ENCODE measurements at regions of chr3 and their contacts with region 1.

Region 1: DNA sequence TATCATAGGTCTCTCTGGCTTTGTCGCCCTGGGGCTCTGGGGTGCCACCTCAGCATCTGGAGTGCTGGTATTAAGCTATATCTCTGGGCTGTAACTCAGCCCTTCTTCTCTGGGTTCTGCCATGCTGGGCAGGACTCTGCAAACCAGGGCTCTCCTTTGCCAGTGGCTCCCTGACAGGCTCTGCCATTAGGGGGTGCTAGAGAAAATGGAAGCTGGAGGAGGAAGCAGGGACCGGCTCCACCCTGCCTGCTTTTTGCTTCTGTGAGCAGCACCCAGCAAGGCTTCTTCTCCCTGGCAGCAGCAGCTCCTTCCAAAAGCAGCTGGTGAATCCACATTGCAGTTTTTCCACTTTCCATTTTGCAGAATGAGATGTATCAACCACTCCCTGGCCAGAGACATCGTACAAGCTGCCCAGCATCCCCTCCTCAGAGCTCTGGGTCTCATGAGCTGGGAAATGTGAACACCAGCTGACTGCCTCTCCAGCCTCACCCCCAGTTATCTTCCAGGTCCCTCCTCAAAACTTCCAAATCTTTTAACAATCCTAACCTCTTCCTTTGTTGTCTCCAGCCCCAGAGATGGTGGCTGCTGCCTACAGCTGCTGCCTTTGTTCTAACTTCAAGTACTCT is 165.0 kb downstream of the ABHD5 start:
- DNase-seq: no peak

Region 2: DNA sequence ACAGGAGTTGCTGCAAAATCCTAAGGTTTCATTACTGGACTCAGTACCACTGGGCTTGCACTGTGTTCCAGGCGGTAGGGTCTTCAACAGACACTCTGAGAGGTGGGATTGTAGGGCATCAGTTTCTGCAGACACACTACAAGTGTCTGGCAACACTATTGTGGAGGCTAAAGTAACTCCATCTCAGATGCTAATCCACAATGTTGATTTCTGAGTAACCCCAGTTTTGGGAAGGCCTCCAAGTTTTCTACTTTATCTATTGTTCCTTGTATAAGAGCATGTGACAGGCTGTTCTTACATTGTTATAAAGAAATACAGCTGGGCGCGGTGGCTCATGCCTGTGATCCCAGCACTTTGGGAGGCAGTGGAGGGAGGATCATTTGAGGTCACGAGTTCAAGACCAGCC is 167.5 kb before region 1 on chr3:
- intact Hi-C with region 1: no loop called
- DNase-seq: no peak

Region 3: DNA sequence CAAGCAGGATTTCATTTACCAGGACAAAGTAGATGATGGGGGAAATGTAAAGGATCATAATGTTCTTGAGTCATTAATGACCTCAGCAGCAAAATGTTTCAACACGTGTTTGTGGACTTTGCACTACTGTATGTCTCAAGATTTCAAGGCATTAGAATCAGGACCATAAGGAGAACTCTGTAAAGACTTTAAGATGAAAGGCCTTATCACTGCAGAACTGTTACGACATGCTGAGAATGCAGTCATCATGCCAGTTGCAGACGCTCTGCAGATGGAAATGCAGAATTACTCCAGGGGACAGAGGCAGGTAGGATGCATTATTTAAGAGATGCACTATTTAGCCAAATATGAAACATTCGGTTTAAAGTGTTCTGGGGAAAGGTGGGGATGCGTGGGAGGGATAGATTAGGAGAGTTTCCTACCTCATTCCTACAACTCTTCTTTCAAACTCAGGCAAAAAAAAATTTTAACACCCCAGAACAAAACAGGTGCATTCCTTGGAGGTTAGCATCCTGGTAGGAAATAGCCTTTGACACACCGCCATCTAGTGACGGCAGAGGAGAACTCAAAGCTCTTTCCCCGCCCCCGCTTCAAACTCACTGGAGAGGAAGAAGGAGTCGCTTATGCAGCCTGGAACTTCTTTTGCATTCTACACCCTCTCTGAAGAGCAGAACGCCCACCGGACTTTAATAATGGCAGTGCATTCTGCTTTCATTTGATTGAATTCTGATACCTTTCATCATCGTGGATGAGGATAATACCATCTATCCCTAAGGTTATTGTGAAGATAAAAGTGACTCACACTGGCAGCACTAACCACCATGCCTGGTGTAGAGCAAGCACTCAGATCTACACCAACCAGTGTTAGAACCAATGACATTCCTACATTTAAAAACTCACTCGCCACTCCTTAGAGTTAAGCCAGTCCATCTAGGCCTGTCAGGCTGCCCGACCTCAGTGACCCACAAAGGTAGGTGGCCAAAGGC is 342.8 kb after region 1 on chr3:
- intact Hi-C with region 1: loop called (anchors 10 kb)
- DNase-seq: no peak